ENCODE measurements at regions of chr11 and their contacts with region 1.

Region 1: DNA sequence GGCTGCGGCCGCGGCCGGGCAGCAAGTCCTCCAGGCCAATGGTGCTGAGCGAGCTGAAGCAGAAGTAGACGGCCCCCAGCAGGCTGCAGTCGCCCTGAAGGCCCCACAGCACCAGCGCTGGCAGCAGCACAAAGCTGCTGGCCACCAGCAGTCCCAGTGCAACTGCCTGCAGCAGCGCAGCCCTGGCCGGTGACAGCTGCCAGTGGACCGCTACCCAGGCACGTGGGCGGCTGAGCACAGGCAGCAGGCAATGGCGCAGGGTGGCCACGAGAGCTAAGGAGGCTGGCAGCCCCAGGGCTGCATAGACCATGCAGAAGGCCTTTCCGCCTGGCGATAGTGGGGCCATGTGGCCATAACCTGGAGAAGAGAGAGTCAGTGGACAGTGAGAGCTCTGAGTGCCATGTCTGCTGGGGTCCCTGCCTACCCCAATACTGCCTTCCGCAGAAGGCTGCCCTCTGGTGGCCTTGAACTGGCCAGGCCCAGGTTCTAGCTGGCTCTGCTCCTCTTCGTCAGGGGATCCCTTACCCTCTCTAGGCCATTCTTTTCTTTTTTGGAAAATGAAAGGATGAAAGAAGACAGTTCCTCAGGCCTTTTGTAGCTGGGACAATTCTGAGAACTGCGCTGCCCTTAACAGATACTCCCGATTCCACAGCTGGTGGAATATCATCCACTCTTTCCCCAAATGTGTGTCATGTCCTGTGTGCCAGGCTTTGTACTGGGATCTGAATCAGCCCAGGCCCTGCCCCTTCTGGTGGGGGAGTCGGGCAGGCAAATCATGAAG is 1.9 kb downstream of the KCNK7 start:
- DNase-seq: peak; percentile 59
- H3K4me3 Mint-ChIP-seq: no peak overlapping the region
- H3K27ac Mint-ChIP-seq: peak overlapping the region; percentile 52
- H3K4me1 Mint-ChIP-seq: peaks cover 30% of the 10 kb centered on the region
- H3K27me3 Mint-ChIP-seq: no peaks in the 10 kb centered on the region

Region 2: GRCh38 chr11:65575568-65576231 is 18.0 kb before region 1 on chr11 and contains the start of gene EHBP1L1:
- CTCF ChIA-PET with region 1: interaction called, 60 read pairs
- DNase-seq: peak; percentile 88
- H3K4me3 Mint-ChIP-seq: peak within 1 kb of the TSS; percentile 85
- H3K27ac Mint-ChIP-seq: peak within 1 kb of the TSS; percentile 97
- H3K4me1 Mint-ChIP-seq: peaks cover 61% of the 10 kb centered on the region
- H3K27me3 Mint-ChIP-seq: peaks cover 4% of the 10 kb centered on the region

Region 3: GRCh38 chr11:65604258-65604657 is 10.6 kb after region 1 on chr11:
- CTCF ChIA-PET with region 1: interaction called, 21 read pairs
- DNase-seq: no peak
- H3K4me3 Mint-ChIP-seq: no peak overlapping the region
- H3K27ac Mint-ChIP-seq: no peak overlapping the region
- H3K4me1 Mint-ChIP-seq: peaks cover 8% of the 10 kb centered on the region
- H3K27me3 Mint-ChIP-seq: no peaks in the 10 kb centered on the region

Region 4: GRCh38 chr11:65613091-65613928 is 19.6 kb after region 1 on chr11:
- CTCF ChIA-PET with region 1: interaction called, 11 read pairs
- DNase-seq: no peak
- H3K4me3 Mint-ChIP-seq: peak overlapping the region; percentile 97
- H3K27ac Mint-ChIP-seq: peak overlapping the region; percentile 97
- H3K4me1 Mint-ChIP-seq: peaks cover 63% of the 10 kb centered on the region
- H3K27me3 Mint-ChIP-seq: no peaks in the 10 kb centered on the region